Esophagus squamous epithelium (tissue), 5 donors: ENCODE measurements at regions of chr13 and their contacts with region 1.

Region 1: DNA sequence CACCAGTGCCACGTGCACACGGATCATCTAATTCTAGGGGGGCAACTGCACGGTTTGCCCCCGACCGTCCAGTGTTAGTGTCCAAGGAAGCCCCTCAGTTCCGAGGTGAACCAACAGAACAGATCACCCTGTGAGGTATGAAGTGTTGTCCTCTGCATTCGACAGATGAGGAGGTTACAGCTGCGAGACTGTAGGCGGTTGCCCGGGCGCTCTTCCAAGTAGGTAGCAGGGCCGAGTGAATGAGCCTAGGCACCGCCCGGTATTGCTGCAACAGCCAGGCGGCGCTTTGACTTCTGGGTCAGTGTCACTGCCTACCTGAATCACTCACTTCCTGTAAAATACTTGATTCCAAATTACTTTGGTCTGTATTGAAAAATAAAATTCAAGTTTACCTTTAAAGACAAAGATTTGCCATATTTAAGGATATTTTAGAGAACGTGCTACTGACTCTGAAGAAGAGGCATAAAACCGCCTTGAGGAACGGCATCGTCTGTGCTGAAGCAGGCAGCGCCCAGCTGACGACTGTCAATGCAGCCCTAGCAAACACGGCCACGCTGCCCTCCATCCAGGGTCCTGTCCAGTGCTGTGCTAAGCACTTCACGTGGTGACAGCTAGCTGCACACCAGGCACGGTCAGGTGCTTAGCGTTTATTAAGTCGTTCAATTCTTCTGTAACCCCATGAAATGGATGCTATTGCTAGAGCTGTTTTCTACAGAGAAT is 19.3 kb upstream of the RASA3 start:
- DNase-seq: no peak
- H3K4me3 ChIP-seq: no peak overlapping the region
- H3K27ac ChIP-seq: no peak overlapping the region
- H3K4me1 ChIP-seq: peaks cover 0 to 12% (median 3%) of the 10 kb centered on the region in 3 donors
- H3K27me3 ChIP-seq: no peaks in the 10 kb centered on the region
- CTCF ChIP-seq: peak in 5 of 6 experiments; percentile 24 to 66 (median 51)
- POLR2A ChIP-seq: no peak

Region 2: DNA sequence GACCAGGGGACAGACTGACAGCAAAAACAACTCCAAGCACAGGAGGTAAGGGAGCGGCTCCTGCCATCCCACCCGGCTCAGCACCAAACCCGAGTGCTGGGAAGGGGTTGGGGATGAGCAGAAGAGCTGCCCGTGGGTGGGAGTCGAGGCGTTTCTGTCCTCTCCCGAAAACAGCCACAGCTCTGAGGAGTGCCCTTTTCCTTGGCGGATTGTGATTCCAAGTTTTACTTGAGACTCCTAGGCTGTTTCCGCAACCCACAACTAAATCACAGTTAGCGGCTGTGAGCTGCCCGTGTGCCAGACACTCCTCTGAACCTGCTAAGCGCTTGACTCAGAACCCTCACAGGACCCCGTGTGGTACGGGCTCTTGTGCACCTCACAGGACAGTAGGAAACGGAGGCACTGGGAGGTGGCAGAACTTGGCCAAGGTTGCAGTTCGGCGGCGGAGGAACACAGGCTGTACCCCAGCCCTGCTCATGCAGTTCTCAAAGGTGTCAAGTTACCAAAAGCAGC is 48.7 kb after region 1 on chr13:
- intact Hi-C with region 1: loop called (anchors 5 kb)
- DNase-seq: no peak
- H3K4me3 ChIP-seq: peak overlapping the region in 1 of 4 donors; percentile 41
- H3K27ac ChIP-seq: no peak overlapping the region
- H3K4me1 ChIP-seq: no peaks in the 10 kb centered on the region
- H3K27me3 ChIP-seq: peaks cover 0 to 34% (median 0%) of the 10 kb centered on the region in 4 donors
- CTCF ChIP-seq: no peak
- POLR2A ChIP-seq: no peak